ENCODE measurements at regions of chr4 and their contacts with region 1.

Region 1: DNA sequence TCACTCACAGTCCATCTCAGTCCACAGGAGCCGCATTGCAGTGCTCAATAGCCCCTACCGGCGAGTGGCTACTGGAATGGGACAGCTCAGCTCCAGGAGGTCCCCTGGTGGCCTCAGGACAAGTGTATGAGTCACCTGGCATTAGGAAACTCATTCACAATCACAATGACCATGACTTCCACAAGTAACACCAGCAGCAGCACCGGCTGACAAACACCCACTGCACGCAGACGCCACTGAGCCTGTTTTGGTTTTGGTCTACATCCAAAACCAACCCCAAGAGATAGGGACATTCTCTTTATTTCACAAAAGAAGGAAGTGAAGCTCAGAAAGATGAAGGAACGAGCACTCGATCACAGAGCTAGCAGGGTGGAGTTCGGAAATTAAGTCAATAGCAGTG is 8.1 kb downstream of the JAKMIP1 start:
- DNase-seq: no peak
- ATAC-seq: peak; percentile 37
- H3K4me3 ChIP-seq: no peak overlapping the region
- H3K27ac ChIP-seq: peak overlapping the region; percentile 50
- H3K4me1 ChIP-seq: peaks cover 30% of the 10 kb centered on the region
- H3K27me3 ChIP-seq: no peaks in the 10 kb centered on the region
- CTCF ChIP-seq: peak in 1 of 3 experiments; percentile 19; a peak in 1 of 6 replicates
- EP300 ChIP-seq: peak; percentile 39 to 53; a peak in 2 of 4 replicates
- POLR2A ChIP-seq: no peak
- RAD21 ChIP-seq: no peak

Region 2: GRCh38 chr4:6041800-6042199 is 150.4 kb before region 1 on chr4:
- CTCF ChIA-PET with region 1: no interaction called
- POLR2A ChIA-PET with region 1: no interaction called
- RAD21 ChIA-PET with region 1: no interaction called
- SMC1A ChIA-PET with region 1: no interaction called
- in situ Hi-C with region 1: no loop called
- intact Hi-C with region 1: no loop called
- DNase-seq: no peak
- ATAC-seq: peak; percentile 32; the same call in 1 of the 3 replicates
- H3K4me3 ChIP-seq: no peak overlapping the region
- H3K27ac ChIP-seq: no peak overlapping the region
- H3K4me1 ChIP-seq: peaks cover 11% of the 10 kb centered on the region
- H3K27me3 ChIP-seq: no peaks in the 10 kb centered on the region; a peak in 2 of 4 replicates
- CTCF ChIP-seq: peak in 1 of 3 experiments; percentile 13; a peak in 1 of 6 replicates
- EP300 ChIP-seq: no peak
- POLR2A ChIP-seq: no peak
- RAD21 ChIP-seq: no peak

Region 3: GRCh38 chr4:6134612-6135220 is 57.5 kb before region 1 on chr4:
- CTCF ChIA-PET with region 1: interaction called, 34 read pairs
- POLR2A ChIA-PET with region 1: interaction called, 7 read pairs
- RAD21 ChIA-PET with region 1: interaction called, 19 read pairs
- SMC1A ChIA-PET with region 1: interaction called, 17 read pairs
- in situ Hi-C with region 1: no loop called
- intact Hi-C with region 1: loop called (anchors 1 kb)
- DNase-seq: peak; percentile 51
- ATAC-seq: peak; percentile 99
- H3K4me3 ChIP-seq: no peak overlapping the region
- H3K27ac ChIP-seq: no peak overlapping the region
- H3K4me1 ChIP-seq: peaks cover 7% of the 10 kb centered on the region; the same call in 1 of the 2 replicates
- H3K27me3 ChIP-seq: no peaks in the 10 kb centered on the region
- CTCF ChIP-seq: peak; percentile 72 to 96 (median 73)
- EP300 ChIP-seq: no peak
- POLR2A ChIP-seq: no peak
- RAD21 ChIP-seq: peak; percentile 78

Measured in GM12878 (cell line).